Activated T-helper 1 cell treated with anti-CD3 and anti-CD28 coated beads, Interleukin-12 subunit alpha, Interleukin-12 subunit beta, Interleukin-2, Interleukin-4 antibody, amounts not matched to agents 30 ng/mL and 10 ng/mL and 1 ng/mL, durations not matched to agents 14 hours and 24 hours and 36 hours (primary cell): ENCODE measurements at regions of chr19 and their contacts with region 1.

Region 1: GRCh38 chr19:45902651-45903625 is 525 bp upstream of the MYPOP start:
- DNase-seq: peak; percentile 100
- H3K4me3 Mint-ChIP-seq: peak overlapping the region; percentile 88
- H3K27ac Mint-ChIP-seq: peak overlapping the region; percentile 80
- H3K4me1 Mint-ChIP-seq: peaks cover 16% of the 10 kb centered on the region
- H3K27me3 Mint-ChIP-seq: peaks cover 1% of the 10 kb centered on the region

Region 2: DNA sequence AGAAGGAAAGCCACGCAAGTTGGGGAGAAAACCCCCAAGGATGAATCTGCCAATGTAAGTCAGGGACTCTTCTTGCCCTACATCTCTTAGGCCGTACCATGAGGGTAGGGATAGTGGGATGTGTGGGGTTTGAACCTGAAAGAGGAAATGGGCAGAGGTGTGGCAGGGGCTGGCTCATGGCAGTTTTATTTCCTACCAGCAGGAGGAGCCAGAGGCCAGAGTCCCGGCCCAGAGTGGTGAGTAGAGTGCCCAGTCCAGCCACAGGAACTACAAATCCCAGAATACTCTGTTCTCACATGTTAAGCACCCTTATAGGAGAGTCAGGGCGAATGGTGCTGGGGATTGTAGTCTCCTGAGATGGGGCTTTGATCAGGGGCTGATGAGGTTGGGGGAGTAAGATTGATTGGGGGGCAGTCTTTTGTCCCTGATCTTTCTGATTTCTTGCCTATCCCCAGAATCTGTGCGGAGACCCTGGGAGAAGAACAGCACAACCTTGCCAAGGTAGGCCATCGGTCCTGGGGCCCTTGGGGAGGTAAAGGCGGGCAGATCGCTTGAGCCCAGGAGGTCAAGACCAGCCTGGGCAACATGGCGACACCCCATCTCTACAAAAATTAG is 379.2 kb before region 1 on chr19:
- intact Hi-C with region 1: no loop called
- DNase-seq: peak; percentile 65
- H3K4me3 Mint-ChIP-seq: no peak overlapping the region
- H3K27ac Mint-ChIP-seq: peak overlapping the region; percentile 37
- H3K4me1 Mint-ChIP-seq: peaks cover 14% of the 10 kb centered on the region
- H3K27me3 Mint-ChIP-seq: no peaks in the 10 kb centered on the region

Region 3: DNA sequence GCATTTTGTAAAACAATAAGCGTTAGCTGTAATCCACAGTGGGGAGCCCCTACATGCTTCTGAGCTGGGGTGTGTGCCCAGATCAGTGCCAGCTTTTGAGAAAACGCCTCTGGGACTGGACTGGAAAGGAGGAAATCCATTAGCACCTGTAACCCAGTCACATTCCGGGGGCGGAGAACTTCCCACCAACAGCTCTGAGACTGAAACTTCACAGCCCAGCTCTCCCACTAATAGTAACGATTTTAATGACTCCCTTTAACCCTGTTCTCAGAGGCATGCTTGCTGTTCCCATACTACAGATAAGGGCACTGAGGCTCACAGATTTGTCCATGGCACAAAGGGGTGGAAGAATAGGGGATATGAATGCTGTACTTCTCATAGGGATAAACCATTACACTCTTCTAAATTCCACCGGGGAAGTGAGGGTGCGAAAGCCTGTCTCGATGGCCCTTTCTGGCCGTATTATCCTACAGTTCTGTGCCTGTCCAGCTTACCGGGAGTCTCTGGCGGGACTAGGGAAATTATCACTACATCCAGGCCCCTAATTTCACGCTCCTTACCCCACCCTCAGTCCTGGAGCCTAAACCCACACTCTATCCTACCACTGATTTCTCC is 173.1 kb before region 1 on chr19:
- intact Hi-C with region 1: no loop called
- DNase-seq: no peak
- H3K4me3 Mint-ChIP-seq: peak overlapping the region; percentile 99
- H3K27ac Mint-ChIP-seq: peak overlapping the region; percentile 85
- H3K4me1 Mint-ChIP-seq: peaks cover 26% of the 10 kb centered on the region
- H3K27me3 Mint-ChIP-seq: peaks cover 2% of the 10 kb centered on the region

Region 4: GRCh38 chr19:45817010-45817724 is 85.8 kb before region 1 on chr19:
- intact Hi-C with region 1: loop called (anchors 1 kb)
- DNase-seq: peak; percentile 89
- H3K4me3 Mint-ChIP-seq: no peak overlapping the region
- H3K27ac Mint-ChIP-seq: no peak overlapping the region
- H3K4me1 Mint-ChIP-seq: no peaks in the 10 kb centered on the region
- H3K27me3 Mint-ChIP-seq: no peaks in the 10 kb centered on the region

Region 5: GRCh38 chr19:45927565-45928261 is 24.8 kb after region 1 on chr19:
- intact Hi-C with region 1: loop called (anchors 1 kb)
- DNase-seq: peak; percentile 86
- H3K4me3 Mint-ChIP-seq: peak overlapping the region; percentile 78
- H3K27ac Mint-ChIP-seq: no peak overlapping the region
- H3K4me1 Mint-ChIP-seq: peaks cover 19% of the 10 kb centered on the region
- H3K27me3 Mint-ChIP-seq: peaks cover 15% of the 10 kb centered on the region

Region 6: GRCh38 chr19:46016426-46017094 is 113.6 kb after region 1 on chr19:
- intact Hi-C with region 1: loop called (anchors 5 kb)
- DNase-seq: peak; percentile 74
- H3K4me3 Mint-ChIP-seq: peak overlapping the region; percentile 89
- H3K27ac Mint-ChIP-seq: peak overlapping the region; percentile 78
- H3K4me1 Mint-ChIP-seq: peaks cover 15% of the 10 kb centered on the region
- H3K27me3 Mint-ChIP-seq: peaks cover 12% of the 10 kb centered on the region